Spleen (tissue), 13 donors: ENCODE measurements at regions of chr17 and their contacts with region 1.

Region 1: GRCh38 chr17:82105882-82106687 is 8.0 kb upstream of the FASN start:
- DNase-seq: peak; percentile 91
- H3K4me3 ChIP-seq: peak overlapping the region; percentile 2 to 68 (median 36)
- H3K27ac ChIP-seq: peak overlapping the region; percentile 76 to 90 (median 83)
- H3K4me1 ChIP-seq: peaks cover 15 to 50% (median 35%) of the 10 kb centered on the region in 6 donors
- H3K27me3 ChIP-seq: no peaks in the 10 kb centered on the region
- CTCF ChIP-seq: peak in 10 of 11 experiments; percentile 14 to 65 (median 50)
- POLR2A ChIP-seq: peak in 1 of 3 donors; percentile 67

Region 2: GRCh38 chr17:81917565-81918332 is 188.3 kb before region 1 on chr17 and contains the start of gene SIRT7:
- intact Hi-C with region 1: no loop called
- DNase-seq: peak; percentile 94
- H3K4me3 ChIP-seq: peak within 1 kb of the TSS; percentile 70 to 99 (median 95)
- H3K27ac ChIP-seq: peak within 1 kb of the TSS; percentile 61 to 98 (median 84)
- H3K4me1 ChIP-seq: peaks cover 14 to 76% (median 53%) of the 10 kb centered on the region in 6 donors
- H3K27me3 ChIP-seq: no peaks in the 10 kb centered on the region
- CTCF ChIP-seq: peak in 2 of 11 experiments; percentile 14 to 19
- POLR2A ChIP-seq: peak in 1 of 3 donors; percentile 78
- total RNA-seq, gene SIRT7: 34.5 to 53.1 (median 37.5) TPM

Region 3: GRCh38 chr17:82041144-82041814 is 64.8 kb before region 1 on chr17:
- intact Hi-C with region 1: loop called (anchors 10 kb)
- DNase-seq: no peak
- H3K4me3 ChIP-seq: no peak overlapping the region
- H3K27ac ChIP-seq: no peak overlapping the region
- H3K4me1 ChIP-seq: peaks cover 5 to 28% (median 17%) of the 10 kb centered on the region in 6 donors
- H3K27me3 ChIP-seq: no peaks in the 10 kb centered on the region
- CTCF ChIP-seq: no peak
- POLR2A ChIP-seq: no peak

Region 4: GRCh38 chr17:82193520-82194220 is 87.6 kb after region 1 on chr17:
- intact Hi-C with region 1: no loop called
- DNase-seq: no peak
- H3K4me3 ChIP-seq: peak overlapping the region in 3 of 8 donors; percentile 20 to 57 (median 32)
- H3K27ac ChIP-seq: peak overlapping the region; percentile 6 to 85 (median 67)
- H3K4me1 ChIP-seq: peaks cover 0 to 26% (median 9%) of the 10 kb centered on the region in 6 donors
- H3K27me3 ChIP-seq: no peaks in the 10 kb centered on the region
- CTCF ChIP-seq: no peak
- POLR2A ChIP-seq: no peak